Activated CD4-positive, alpha-beta memory T cell treated with anti-CD3 and anti-CD28 coated beads, Interleukin-2, amount 10 ng/mL, durations not matched to agents 7 days and 5 days (primary cell): ENCODE measurements at regions of chrX and their contacts with region 1.

Region 1: DNA sequence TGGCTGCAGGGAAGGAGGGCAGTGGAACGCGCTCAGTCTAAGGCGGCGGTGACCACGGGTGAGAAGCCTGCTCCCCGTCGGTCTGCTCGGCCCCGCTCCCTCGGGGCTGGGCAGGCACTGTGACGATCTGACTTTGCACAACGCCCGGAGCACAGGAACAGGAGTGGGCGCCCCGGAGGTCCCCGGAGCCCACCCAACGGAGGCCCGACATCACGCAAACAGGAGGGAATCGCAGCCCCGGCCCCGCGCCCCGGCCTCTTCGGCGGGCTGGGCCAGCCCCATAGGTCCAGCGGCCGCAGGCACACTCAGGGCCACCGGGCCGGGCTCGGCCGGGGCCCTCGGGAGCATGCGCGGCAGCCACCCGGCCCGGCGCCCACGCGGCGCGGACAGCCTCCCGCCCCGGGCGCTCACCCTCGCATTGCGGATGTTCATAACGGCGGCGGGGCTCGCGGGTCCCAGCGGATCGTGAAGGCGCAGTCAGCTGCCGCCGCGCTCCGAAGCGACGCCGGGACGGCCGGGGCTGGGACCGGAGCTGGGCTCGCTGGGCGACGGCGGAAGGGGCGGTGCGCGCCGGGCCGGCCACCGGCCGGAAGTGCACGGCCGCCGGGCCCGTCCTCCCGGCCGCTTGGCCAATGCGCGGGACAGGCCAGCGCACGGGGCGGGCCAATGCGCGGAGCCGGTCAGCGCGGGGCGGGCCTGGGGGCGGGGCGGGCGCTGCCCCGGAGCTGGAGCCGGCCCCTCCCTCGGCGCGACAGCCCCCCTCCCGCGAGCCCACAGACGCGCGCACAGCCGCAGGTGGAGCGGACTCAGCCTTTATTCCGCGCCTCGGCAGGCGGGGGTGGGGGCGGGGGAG is at the start of gene NAA10:
- DNase-seq: peak; percentile 60
- H3K4me3 Mint-ChIP-seq: peak within 1 kb of the TSS; percentile 84
- H3K27ac Mint-ChIP-seq: peak within 1 kb of the TSS; percentile 64
- H3K4me1 Mint-ChIP-seq: peaks cover 29% of the 10 kb centered on the region
- H3K27me3 Mint-ChIP-seq: no peaks in the 10 kb centered on the region
- total RNA-seq, gene NAA10: 63.1 to 63.7 TPM

Region 2: GRCh38 chrX:153845842-153846241 is 88.9 kb before region 1 on chrX:
- CTCF ChIA-PET with region 1: no interaction called
- POLR2A ChIA-PET with region 1: no interaction called
- DNase-seq: no peak
- H3K4me3 Mint-ChIP-seq: no peak overlapping the region
- H3K27ac Mint-ChIP-seq: no peak overlapping the region
- H3K4me1 Mint-ChIP-seq: no peaks in the 10 kb centered on the region
- H3K27me3 Mint-ChIP-seq: peaks cover 16% of the 10 kb centered on the region

Region 3: DNA sequence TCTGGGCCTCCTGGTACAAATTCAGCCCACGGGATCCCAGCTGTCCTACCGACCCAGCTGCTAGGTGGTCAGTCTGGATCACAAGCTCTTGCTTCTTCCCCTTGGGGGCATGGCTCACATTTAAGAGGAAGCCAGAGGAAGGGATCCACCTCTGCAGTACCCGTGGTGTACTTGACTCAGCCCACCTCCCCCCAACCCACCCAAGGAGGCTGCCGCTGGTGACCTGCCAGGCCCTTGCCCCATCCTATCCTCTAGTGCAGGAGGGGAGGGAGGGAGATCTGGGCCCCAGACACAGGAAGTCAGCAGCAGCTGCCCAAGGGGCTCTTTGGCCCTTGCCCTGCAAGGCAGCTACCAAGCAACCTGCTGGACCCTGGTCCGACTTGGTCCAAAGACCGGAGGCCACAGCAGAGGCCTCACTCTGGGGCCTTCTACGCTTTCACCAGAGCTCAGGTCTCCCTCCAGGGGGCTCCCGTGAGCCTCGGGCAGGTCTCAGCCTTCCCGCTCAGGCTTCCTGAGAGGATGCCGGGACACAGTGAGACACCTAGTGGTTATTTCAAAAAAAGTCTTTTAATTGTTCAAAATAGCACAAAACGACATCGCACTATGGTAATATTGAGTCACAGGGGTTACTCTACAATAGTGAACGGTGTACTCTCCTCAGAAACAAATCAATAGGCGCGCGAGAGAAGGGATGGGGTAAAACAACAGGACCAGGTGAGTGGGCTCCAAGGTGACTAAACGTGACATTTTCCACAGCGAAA is 12.5 kb after region 1 on chrX:
- CTCF ChIA-PET with region 1: interaction called, 148 read pairs
- POLR2A ChIA-PET with region 1: interaction called, 140 read pairs
- DNase-seq: peak; percentile 79
- H3K4me3 Mint-ChIP-seq: no peak overlapping the region
- H3K27ac Mint-ChIP-seq: peak overlapping the region; percentile 65
- H3K4me1 Mint-ChIP-seq: peaks cover 17% of the 10 kb centered on the region
- H3K27me3 Mint-ChIP-seq: no peaks in the 10 kb centered on the region

Region 4: DNA sequence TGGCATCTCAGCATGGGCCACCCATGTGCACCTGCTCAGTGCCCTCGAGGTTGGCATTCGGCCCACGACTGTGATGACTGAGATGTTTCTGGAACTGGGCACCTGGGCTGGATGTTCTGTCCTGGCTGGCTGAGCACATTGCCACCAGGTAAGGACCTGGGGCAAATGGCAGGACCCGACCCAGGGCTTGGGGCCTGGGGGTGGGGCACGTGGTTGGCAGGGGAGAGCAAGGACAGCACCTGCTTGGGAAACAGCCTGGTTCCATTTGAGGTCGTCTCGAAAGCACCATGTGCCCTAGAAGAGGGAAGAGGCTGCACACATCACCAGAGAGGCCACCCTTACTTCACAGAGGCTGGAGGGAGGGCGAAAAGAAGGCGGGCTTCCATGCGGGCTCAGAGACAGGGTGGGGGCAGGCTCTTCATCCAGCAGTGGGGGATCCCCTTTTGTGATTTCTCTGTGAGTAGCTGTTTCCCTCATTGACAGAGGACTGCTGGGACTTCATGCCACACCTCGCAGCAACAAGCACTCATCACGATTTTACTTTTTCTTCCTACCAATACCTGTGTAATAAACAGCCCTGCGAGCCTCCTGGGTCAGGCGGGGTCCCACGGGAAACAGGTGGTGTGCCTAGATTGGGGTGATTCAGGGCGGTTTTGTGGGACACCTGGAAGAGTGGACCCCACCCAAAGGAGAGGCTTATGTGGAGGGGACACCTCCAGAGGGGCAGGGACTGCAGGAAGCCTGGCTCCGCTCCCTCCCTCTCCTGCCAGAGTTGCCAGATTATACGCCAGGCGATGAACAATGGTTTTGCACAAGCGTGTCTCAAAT is 49.9 kb after region 1 on chrX:
- CTCF ChIA-PET with region 1: no interaction called
- POLR2A ChIA-PET with region 1: no interaction called
- DNase-seq: no peak
- H3K4me3 Mint-ChIP-seq: peak overlapping the region; percentile 76
- H3K27ac Mint-ChIP-seq: peak overlapping the region; percentile 93
- H3K4me1 Mint-ChIP-seq: peaks cover 64% of the 10 kb centered on the region
- H3K27me3 Mint-ChIP-seq: no peaks in the 10 kb centered on the region

Region 5: GRCh38 chrX:154019633-154020528 is 85.2 kb after region 1 on chrX and contains the start of gene IRAK1:
- CTCF ChIA-PET with region 1: no interaction called
- POLR2A ChIA-PET with region 1: no interaction called
- DNase-seq: peak; percentile 65
- H3K4me3 Mint-ChIP-seq: peak within 1 kb of the TSS; percentile 89
- H3K27ac Mint-ChIP-seq: peak within 1 kb of the TSS; percentile 94
- H3K4me1 Mint-ChIP-seq: peaks cover 19% of the 10 kb centered on the region
- H3K27me3 Mint-ChIP-seq: no peaks in the 10 kb centered on the region
- total RNA-seq, gene IRAK1: 118 to 122 TPM